ENCODE measurements at regions of chr5 and their contacts with region 1.

Region 1: DNA sequence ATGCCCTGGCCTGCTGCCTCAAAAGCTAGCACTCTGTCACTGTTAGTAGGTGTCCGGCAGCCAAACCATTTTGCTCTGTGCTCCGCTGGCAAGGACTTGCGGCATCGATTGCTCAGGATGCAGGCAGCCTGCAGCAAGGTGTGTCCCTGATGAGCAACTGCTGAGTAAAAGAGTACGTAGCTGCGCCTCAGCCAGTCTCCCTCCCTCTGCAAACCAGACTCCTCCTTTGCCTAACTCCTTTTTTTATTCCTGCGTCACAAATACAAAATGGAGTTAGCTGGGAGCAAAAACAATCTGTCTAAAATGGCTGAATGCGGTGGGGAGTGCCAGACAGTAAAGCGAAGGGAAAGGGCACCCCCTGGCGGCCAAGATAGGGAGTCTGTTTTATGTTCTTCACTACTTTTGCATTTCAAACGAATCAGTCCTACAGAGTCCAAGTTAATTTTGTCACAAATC is 61.1 kb downstream of the DIAPH1 start:
- DNase-seq: peak; percentile 82 to 96 (median 88)
- H3K4me3 ChIP-seq: peak overlapping the region; percentile 8 to 74 (median 53)
- H3K27ac ChIP-seq: peak overlapping the region; percentile 38 to 98 (median 93)
- H3K27me3 ChIP-seq: no peaks in the 10 kb centered on the region
- CTCF ChIP-seq: peak; percentile 88 to 100 (median 96)

Region 2: GRCh38 chr5:141320225-141321169 is 237.2 kb before region 1 on chr5 and contains the start of gene TAF7:
- intact Hi-C with region 1: loop called (anchors 2 kb)
- DNase-seq: peak; percentile 79 to 92 (median 88)
- H3K4me3 ChIP-seq: peak within 1 kb of the TSS; percentile 57 to 97 (median 84)
- H3K27ac ChIP-seq: peak within 1 kb of the TSS; percentile 86 to 99 (median 96)
- H3K27me3 ChIP-seq: peaks cover 0 to 3% (median 0%) of the 10 kb centered on the region in 45 donors
- CTCF ChIP-seq: peak; percentile 65 to 92 (median 78)
- total RNA-seq, gene TAF7: 40.8 to 97.5 (median 65.5) TPM

Region 3: GRCh38 chr5:141402553-141403260 is 155.0 kb before region 1 on chr5 and contains the start of gene PCDHGA9:
- intact Hi-C with region 1: loop called in 1 of 2 experiments (anchors 5 kb)
- DNase-seq: peak in 2 of 10 donors; percentile 14 to 19
- H3K4me3 ChIP-seq: peak within 1 kb of the TSS in 52 of 59 donors; percentile 3 to 62 (median 40)
- H3K27ac ChIP-seq: peak within 1 kb of the TSS in 1 of 59 donors; percentile 14
- H3K27me3 ChIP-seq: peaks cover 0 to 2% (median 0%) of the 10 kb centered on the region in 45 donors
- CTCF ChIP-seq: peak in 45 of 56 donors; percentile 3 to 53 (median 35)
- total RNA-seq, gene PCDHGA9: 8.9 to 23.5 (median 15.0) TPM

Region 4: GRCh38 chr5:141475625-141476131 is 82.0 kb before region 1 on chr5 and contains the start of gene PCDHGC3:
- intact Hi-C with region 1: loop called (anchors 2 kb)
- DNase-seq: peak; percentile 68 to 93 (median 89)
- H3K4me3 ChIP-seq: peak within 1 kb of the TSS; percentile 35 to 85 (median 69)
- H3K27ac ChIP-seq: peak within 1 kb of the TSS in 56 of 59 donors; percentile 4 to 92 (median 78)
- H3K27me3 ChIP-seq: peaks cover 0 to 41% (median 0%) of the 10 kb centered on the region in 45 donors
- CTCF ChIP-seq: peak in 54 of 56 donors; percentile 7 to 77 (median 60)
- total RNA-seq, gene PCDHGC3: 96.7 to 415 (median 161) TPM

Region 5: GRCh38 chr5:141524604-141525597 is 32.8 kb before region 1 on chr5:
- intact Hi-C with region 1: loop called (anchors 2 to 5 kb)
- DNase-seq: peak; percentile 60 to 92 (median 83)
- H3K4me3 ChIP-seq: peak overlapping the region in 41 of 59 donors; percentile 1 to 47 (median 27)
- H3K27ac ChIP-seq: peak overlapping the region in 58 of 59 donors; percentile 8 to 96 (median 78)
- H3K27me3 ChIP-seq: peaks cover 0 to 9% (median 0%) of the 10 kb centered on the region in 45 donors
- CTCF ChIP-seq: peak in 55 of 56 donors; percentile 99 to 100 (median 100)